OCI-LY7 (cell line): ENCODE measurements at regions of chrX and their contacts with region 1.

Region 1: GRCh38 chrX:47193475-47194193 is at the start of gene UBA1:
- DNase-seq: peak; percentile 95
- H3K4me3 ChIP-seq: peak within 1 kb of the TSS; percentile 94
- H3K27ac ChIP-seq: peak within 1 kb of the TSS; percentile 99
- H3K4me1 ChIP-seq: peaks cover 33% of the 10 kb centered on the region
- CTCF ChIP-seq: peak; percentile 81
- total RNA-seq, gene UBA1: 137 and 169 TPM in 2 replicates

Region 2: GRCh38 chrX:47144626-47145394 is 48.8 kb before region 1 on chrX and contains the starts of genes NDUFB11 and RBM10:
- CTCF ChIA-PET with region 1: no interaction called
- POLR2A ChIA-PET with region 1: interaction called, 7 read pairs
- intact Hi-C with region 1: loop called (anchors 1 kb)
- DNase-seq: peak; percentile 94
- H3K4me3 ChIP-seq: peak within 1 kb of the TSS; percentile 95
- H3K27ac ChIP-seq: peak within 1 kb of the TSS; percentile 93
- H3K4me1 ChIP-seq: peaks cover 20% of the 10 kb centered on the region
- CTCF ChIP-seq: peak; percentile 67
- total RNA-seq, gene NDUFB11: 139 TPM in 2 replicates
- total RNA-seq, gene RBM10: 40.1 and 45.6 TPM in 2 replicates

Region 3: GRCh38 chrX:47217642-47218279 is 24.1 kb after region 1 on chrX:
- CTCF ChIA-PET with region 1: no interaction called
- POLR2A ChIA-PET with region 1: interaction called, 8 read pairs
- intact Hi-C with region 1: loop called (anchors 1 kb)
- DNase-seq: peak; percentile 96
- H3K4me3 ChIP-seq: peak overlapping the region; percentile 98
- H3K27ac ChIP-seq: peak overlapping the region; percentile 80
- H3K4me1 ChIP-seq: peaks cover 26% of the 10 kb centered on the region
- CTCF ChIP-seq: no peak

Region 4: DNA sequence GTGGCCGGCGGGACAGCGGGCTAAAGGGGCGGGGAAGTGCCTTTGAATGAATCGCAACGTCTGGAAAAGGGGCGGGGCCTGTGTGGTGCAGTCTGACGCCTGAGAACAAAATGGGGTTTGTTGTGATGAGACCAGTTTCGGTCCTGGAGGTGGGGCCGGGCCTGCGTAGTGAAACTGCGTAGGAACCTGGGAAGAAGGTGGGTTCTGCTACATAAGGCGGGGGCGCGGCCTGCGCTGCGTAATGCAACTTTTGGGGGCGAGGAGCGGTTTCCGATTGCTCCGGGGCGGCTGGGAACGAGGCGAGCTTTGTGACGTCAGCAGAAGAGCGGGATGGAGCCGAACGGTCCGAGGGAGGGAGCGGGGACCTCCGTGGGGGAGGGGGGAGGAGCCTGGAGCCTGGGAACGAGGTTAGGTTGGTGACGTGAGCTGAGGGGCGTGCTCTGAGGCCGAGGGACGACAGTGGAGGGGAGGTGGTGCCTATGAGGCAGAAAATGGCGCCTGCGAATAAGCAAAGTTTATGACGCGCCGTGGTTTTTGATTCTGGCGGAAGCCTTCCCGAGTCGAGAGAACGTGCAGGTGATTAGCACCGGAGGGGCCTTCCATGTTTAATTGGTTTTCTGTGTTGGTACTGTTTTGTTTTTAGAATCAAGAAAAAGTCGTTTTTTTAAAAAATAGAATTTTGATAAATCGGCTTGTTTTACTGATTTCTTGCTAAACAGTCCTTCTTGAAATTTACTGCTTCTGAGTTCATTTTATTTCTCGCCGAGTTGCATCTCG is 39.9 kb after region 1 on chrX:
- CTCF ChIA-PET with region 1: no interaction called
- POLR2A ChIA-PET with region 1: interaction called, 4 read pairs
- intact Hi-C with region 1: loop called (anchors 1 kb)
- DNase-seq: peak; percentile 90
- H3K4me3 ChIP-seq: peak overlapping the region; percentile 77
- H3K27ac ChIP-seq: peak overlapping the region; percentile 91
- H3K4me1 ChIP-seq: peaks cover 20% of the 10 kb centered on the region
- CTCF ChIP-seq: no peak

Region 5: GRCh38 chrX:47361538-47362511 is 168.2 kb after region 1 on chrX:
- CTCF ChIA-PET with region 1: no interaction called
- POLR2A ChIA-PET with region 1: no interaction called
- intact Hi-C with region 1: loop called (anchors 1 kb)
- DNase-seq: peak; percentile 93
- H3K4me3 ChIP-seq: peak overlapping the region; percentile 68
- H3K27ac ChIP-seq: peak overlapping the region; percentile 74
- H3K4me1 ChIP-seq: peaks cover 33% of the 10 kb centered on the region
- CTCF ChIP-seq: peak; percentile 47

Region 6: DNA sequence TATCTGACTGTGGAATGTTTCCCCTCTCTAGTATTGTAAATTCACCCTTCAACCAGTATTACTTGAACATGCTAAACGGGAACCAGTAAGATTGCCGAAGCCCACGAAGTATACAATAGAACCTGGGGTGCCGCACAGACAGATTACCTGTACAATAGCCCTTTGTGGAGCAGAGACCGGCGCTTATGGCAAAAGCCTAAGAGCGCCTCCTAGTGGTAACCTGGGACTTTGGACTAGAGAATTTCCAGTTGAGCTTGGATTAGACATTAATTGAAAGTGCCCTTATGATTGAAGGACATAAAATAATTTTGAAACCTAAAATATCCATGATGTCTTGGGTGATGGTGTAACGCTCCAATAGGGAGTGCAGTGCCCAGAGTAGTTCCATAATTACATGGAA is 190.9 kb after region 1 on chrX:
- CTCF ChIA-PET with region 1: no interaction called
- POLR2A ChIA-PET with region 1: interaction called, 5 read pairs
- intact Hi-C with region 1: loop called (anchors 1 kb)
- DNase-seq: peak; percentile 81
- H3K4me3 ChIP-seq: no peak overlapping the region
- H3K27ac ChIP-seq: no peak overlapping the region
- H3K4me1 ChIP-seq: no peaks in the 10 kb centered on the region
- CTCF ChIP-seq: peak; percentile 88

Region 7: GRCh38 chrX:47523297-47523696 is 329.7 kb after region 1 on chrX:
- CTCF ChIA-PET with region 1: no interaction called
- POLR2A ChIA-PET with region 1: interaction called, 3 read pairs
- intact Hi-C with region 1: loop called (anchors 5 kb)
- DNase-seq: peak; percentile 78
- H3K4me3 ChIP-seq: peak overlapping the region; percentile 68
- H3K27ac ChIP-seq: no peak overlapping the region
- H3K4me1 ChIP-seq: peaks cover 9% of the 10 kb centered on the region
- CTCF ChIP-seq: peak; percentile 74